ENCODE measurements at regions of chr1 and their contacts with region 1.

Region 1: GRCh38 chr1:1115786-1116700 is at the start of gene C1orf159:
- DNase-seq: peak; percentile 99
- ATAC-seq: peak; percentile 99 to 100 (median 99)
- H3K4me3 ChIP-seq: peak within 1 kb of the TSS; percentile 69 to 98 (median 93)
- H3K27ac ChIP-seq: peak within 1 kb of the TSS in 11 of 12 donors; percentile 67 to 86 (median 78)
- H3K4me1 ChIP-seq: peaks cover 0 to 15% (median 5%) of the 10 kb centered on the region in 12 donors
- H3K27me3 ChIP-seq: peaks cover 0 to 18% (median 0%) of the 10 kb centered on the region in 9 donors
- CTCF ChIP-seq: peak in 1 of 12 donors; percentile 23
- POLR2A ChIP-seq: no peak
- total RNA-seq, gene C1orf159: 3.7 to 6.6 (median 4.2) TPM

Region 2: GRCh38 chr1:975896-976683 is 140.0 kb before region 1 on chr1:
- intact Hi-C with region 1: no loop called
- DNase-seq: peak in 3 of 5 donors; percentile 44 to 79 (median 53)
- ATAC-seq: no peak
- H3K4me3 ChIP-seq: peak overlapping the region in 9 of 12 donors; percentile 12 to 40 (median 29)
- H3K27ac ChIP-seq: peak overlapping the region in 8 of 12 donors; percentile 29 to 76 (median 58)
- H3K4me1 ChIP-seq: peaks cover 0 to 46% (median 11%) of the 10 kb centered on the region in 12 donors
- H3K27me3 ChIP-seq: peaks cover 0 to 54% (median 28%) of the 10 kb centered on the region in 9 donors
- CTCF ChIP-seq: peak in 9 of 12 donors; percentile 4 to 59 (median 32)
- POLR2A ChIP-seq: no peak

Region 3: GRCh38 chr1:1033009-1033587 is 82.9 kb before region 1 on chr1:
- intact Hi-C with region 1: loop called in 1 of 10 experiments (anchors 10 kb)
- DNase-seq: peak; percentile 75 to 87 (median 84)
- ATAC-seq: peak; percentile 55 to 89 (median 80)
- H3K4me3 ChIP-seq: peak overlapping the region; percentile 7 to 61 (median 50)
- H3K27ac ChIP-seq: no peak overlapping the region
- H3K4me1 ChIP-seq: peaks cover 3 to 26% (median 14%) of the 10 kb centered on the region in 12 donors
- H3K27me3 ChIP-seq: peaks cover 0 to 47% (median 0%) of the 10 kb centered on the region in 9 donors
- CTCF ChIP-seq: peak; percentile 62 to 79 (median 66)
- POLR2A ChIP-seq: peak in 1 of 2 donors; percentile 6

Region 4: GRCh38 chr1:1231400-1232223 is 115.6 kb after region 1 on chr1 and contains the start of gene SDF4:
- intact Hi-C with region 1: loop called in 5 of 10 experiments (anchors 5 to 10 kb)
- DNase-seq: peak; percentile 97 to 99 (median 98)
- ATAC-seq: peak; percentile 96 to 98 (median 97)
- H3K4me3 ChIP-seq: peak within 1 kb of the TSS; percentile 81 to 100 (median 98)
- H3K27ac ChIP-seq: peak within 1 kb of the TSS; percentile 92 to 99 (median 97)
- H3K4me1 ChIP-seq: peaks cover 8 to 49% (median 31%) of the 10 kb centered on the region in 12 donors
- H3K27me3 ChIP-seq: no peaks in the 10 kb centered on the region
- CTCF ChIP-seq: no peak
- POLR2A ChIP-seq: no peak
- total RNA-seq, gene SDF4: 102 to 167 (median 120) TPM

Region 5: GRCh38 chr1:1273512-1274298 is 157.7 kb after region 1 on chr1 and contains the start of gene UBE2J2:
- intact Hi-C with region 1: loop called in 1 of 10 experiments (anchors 1 kb)
- DNase-seq: peak; percentile 95 to 98 (median 96)
- ATAC-seq: peak; percentile 95 to 98 (median 97)
- H3K4me3 ChIP-seq: peak within 1 kb of the TSS; percentile 61 to 99 (median 94)
- H3K27ac ChIP-seq: peak within 1 kb of the TSS; percentile 41 to 96 (median 90)
- H3K4me1 ChIP-seq: peaks cover 14 to 47% (median 38%) of the 10 kb centered on the region in 12 donors
- H3K27me3 ChIP-seq: no peaks in the 10 kb centered on the region
- CTCF ChIP-seq: peak in 5 of 12 donors; percentile 5 to 35 (median 24)
- POLR2A ChIP-seq: peak in 1 of 2 donors; percentile 67
- total RNA-seq, gene UBE2J2: 23.3 to 43.9 (median 33.2) TPM

Region 6: GRCh38 chr1:1374929-1375662 is 259.1 kb after region 1 on chr1 and contains the start of gene AURKAIP1:
- intact Hi-C with region 1: loop called in 1 of 10 experiments (anchors 10 kb)
- DNase-seq: peak; percentile 98 to 99 (median 99)
- ATAC-seq: peak; percentile 95 to 98 (median 96)
- H3K4me3 ChIP-seq: peak within 1 kb of the TSS; percentile 78 to 100 (median 94)
- H3K27ac ChIP-seq: peak within 1 kb of the TSS; percentile 82 to 99 (median 96)
- H3K4me1 ChIP-seq: peaks cover 10 to 42% (median 33%) of the 10 kb centered on the region in 12 donors
- H3K27me3 ChIP-seq: no peaks in the 10 kb centered on the region
- CTCF ChIP-seq: peak in 6 of 12 donors; percentile 17 to 62 (median 34)
- POLR2A ChIP-seq: peak; percentile 12 to 76
- total RNA-seq, gene AURKAIP1: 157 to 273 (median 188) TPM

Region 7: GRCh38 chr1:1489861-1490260 is 373.8 kb after region 1 on chr1:
- intact Hi-C with region 1: no loop called
- DNase-seq: no peak
- ATAC-seq: no peak
- H3K4me3 ChIP-seq: no peak overlapping the region
- H3K27ac ChIP-seq: no peak overlapping the region
- H3K4me1 ChIP-seq: no peaks in the 10 kb centered on the region
- H3K27me3 ChIP-seq: no peaks in the 10 kb centered on the region
- CTCF ChIP-seq: no peak
- POLR2A ChIP-seq: no peak

Region 8: GRCh38 chr1:1615256-1616044 is 499.4 kb after region 1 on chr1 and contains the start of gene MIB2:
- intact Hi-C with region 1: loop called in 1 of 10 experiments (anchors 10 kb)
- DNase-seq: peak; percentile 96 to 99 (median 97)
- ATAC-seq: peak; percentile 91 to 95 (median 94)
- H3K4me3 ChIP-seq: peak within 1 kb of the TSS; percentile 81 to 100 (median 97)
- H3K27ac ChIP-seq: peak within 1 kb of the TSS; percentile 99 to 100 (median 100)
- H3K4me1 ChIP-seq: peaks cover 4 to 49% (median 32%) of the 10 kb centered on the region in 12 donors
- H3K27me3 ChIP-seq: no peaks in the 10 kb centered on the region
- CTCF ChIP-seq: no peak
- POLR2A ChIP-seq: peak in 1 of 2 donors; percentile 84
- total RNA-seq, gene MIB2: 59.2 to 114 (median 76.3) TPM

Measured in heart left ventricle (tissue), 16 donors.